Left ventricle myocardium superior (tissue), 1 donor: ENCODE measurements at regions of chr11 and their contacts with region 1.

Region 1: GRCh38 chr11:45089676-45090499 is 56.6 kb upstream of the PRDM11 start:
- DNase-seq: no peak
- ATAC-seq: peak; percentile 10

Region 2: DNA sequence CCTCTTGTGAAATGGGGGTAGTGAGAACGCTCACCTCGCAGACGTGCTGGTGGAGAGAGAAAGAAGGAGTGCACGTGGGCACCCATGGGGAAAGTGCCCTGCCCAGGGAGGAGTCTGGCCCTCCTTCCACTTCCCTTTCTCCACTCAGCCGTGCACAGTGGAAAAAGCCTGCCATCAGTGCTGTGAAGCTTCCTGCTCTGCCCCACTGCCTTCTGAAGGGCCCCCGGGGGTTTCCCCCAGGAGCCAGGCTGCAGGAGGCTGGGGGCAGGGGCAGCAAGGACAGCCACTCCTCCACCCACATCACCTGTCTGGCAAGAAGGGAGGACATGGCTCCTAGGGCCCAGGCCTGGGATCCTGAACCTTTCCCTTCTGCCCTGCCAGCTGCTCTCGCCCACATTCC is 146.8 kb before region 1 on chr11:
- intact Hi-C with region 1: loop called (anchors 5 kb)
- DNase-seq: no peak
- ATAC-seq: no peak

Region 3: GRCh38 chr11:45193695-45194094 is 103.8 kb after region 1 on chr11:
- intact Hi-C with region 1: no loop called
- DNase-seq: peak; percentile 72
- ATAC-seq: peak; percentile 95